MCF 10A (cell line): ENCODE measurements at regions of chr5 and their contacts with region 1.

Region 1: DNA sequence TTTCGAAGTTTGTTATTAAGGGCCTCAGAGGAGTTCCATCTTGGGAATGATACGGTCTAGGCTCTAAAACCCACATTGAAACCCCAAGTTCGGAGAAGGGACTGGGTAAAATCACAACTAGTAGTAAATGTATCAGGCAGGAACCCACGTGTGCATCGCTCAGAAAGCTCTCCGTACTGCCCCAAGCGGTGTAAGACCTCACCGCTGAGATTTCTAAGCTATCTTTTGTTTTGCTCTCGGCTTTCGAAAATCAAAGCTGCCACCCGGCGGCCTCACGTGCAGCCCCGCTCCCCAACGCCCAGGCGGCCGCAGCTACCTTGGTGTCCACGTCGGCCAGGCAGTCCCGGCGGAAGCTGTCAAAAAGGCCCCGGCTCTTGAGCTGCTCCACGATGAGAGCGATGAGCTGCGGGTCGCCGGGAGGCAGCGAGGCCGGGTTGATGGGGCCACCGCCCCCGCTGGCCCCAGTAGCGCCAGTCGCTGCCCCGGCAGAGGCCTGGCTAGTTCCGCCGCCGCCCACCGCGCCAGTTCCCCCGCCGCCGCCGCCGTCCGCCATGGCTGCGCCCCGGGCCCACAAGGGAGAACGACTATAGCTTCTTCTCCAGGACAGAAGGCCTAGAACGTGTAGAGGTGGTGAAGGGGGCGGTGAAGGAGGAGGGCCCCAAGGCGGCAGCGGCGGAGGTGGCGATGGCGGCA is 420 bp downstream of the BOD1 start:
- DNase-seq: peak; percentile 85
- H3K4me3 Mint-ChIP-seq: peak overlapping the region; percentile 78
- H3K27ac Mint-ChIP-seq: peak overlapping the region; percentile 77
- H3K4me1 Mint-ChIP-seq: peaks cover 38% of the 10 kb centered on the region
- H3K27me3 Mint-ChIP-seq: no peaks in the 10 kb centered on the region
- CTCF ChIP-seq: peak; percentile 70

Region 2: GRCh38 chr5:172315587-172316493 is 1300.2 kb before region 1 on chr5:
- CTCF ChIA-PET with region 1: no interaction called
- POLR2A ChIA-PET with region 1: no interaction called
- intact Hi-C with region 1: no loop called
- DNase-seq: no peak
- H3K4me3 Mint-ChIP-seq: no peak overlapping the region
- H3K27ac Mint-ChIP-seq: peak overlapping the region; percentile 13
- H3K4me1 Mint-ChIP-seq: peaks cover 12% of the 10 kb centered on the region
- H3K27me3 Mint-ChIP-seq: no peaks in the 10 kb centered on the region
- CTCF ChIP-seq: no peak

Region 3: GRCh38 chr5:173412566-173412965 is 203.5 kb before region 1 on chr5:
- CTCF ChIA-PET with region 1: no interaction called
- POLR2A ChIA-PET with region 1: no interaction called
- intact Hi-C with region 1: no loop called
- DNase-seq: no peak
- H3K4me3 Mint-ChIP-seq: no peak overlapping the region
- H3K27ac Mint-ChIP-seq: no peak overlapping the region
- H3K4me1 Mint-ChIP-seq: no peaks in the 10 kb centered on the region
- H3K27me3 Mint-ChIP-seq: no peaks in the 10 kb centered on the region
- CTCF ChIP-seq: no peak

Region 4: GRCh38 chr5:173536312-173536641 is 79.8 kb before region 1 on chr5:
- CTCF ChIA-PET with region 1: no interaction called
- POLR2A ChIA-PET with region 1: no interaction called
- intact Hi-C with region 1: no loop called
- DNase-seq: peak; percentile 23
- H3K4me3 Mint-ChIP-seq: no peak overlapping the region
- H3K27ac Mint-ChIP-seq: no peak overlapping the region
- H3K4me1 Mint-ChIP-seq: peaks cover 11% of the 10 kb centered on the region
- H3K27me3 Mint-ChIP-seq: no peaks in the 10 kb centered on the region
- CTCF ChIP-seq: no peak

Region 5: DNA sequence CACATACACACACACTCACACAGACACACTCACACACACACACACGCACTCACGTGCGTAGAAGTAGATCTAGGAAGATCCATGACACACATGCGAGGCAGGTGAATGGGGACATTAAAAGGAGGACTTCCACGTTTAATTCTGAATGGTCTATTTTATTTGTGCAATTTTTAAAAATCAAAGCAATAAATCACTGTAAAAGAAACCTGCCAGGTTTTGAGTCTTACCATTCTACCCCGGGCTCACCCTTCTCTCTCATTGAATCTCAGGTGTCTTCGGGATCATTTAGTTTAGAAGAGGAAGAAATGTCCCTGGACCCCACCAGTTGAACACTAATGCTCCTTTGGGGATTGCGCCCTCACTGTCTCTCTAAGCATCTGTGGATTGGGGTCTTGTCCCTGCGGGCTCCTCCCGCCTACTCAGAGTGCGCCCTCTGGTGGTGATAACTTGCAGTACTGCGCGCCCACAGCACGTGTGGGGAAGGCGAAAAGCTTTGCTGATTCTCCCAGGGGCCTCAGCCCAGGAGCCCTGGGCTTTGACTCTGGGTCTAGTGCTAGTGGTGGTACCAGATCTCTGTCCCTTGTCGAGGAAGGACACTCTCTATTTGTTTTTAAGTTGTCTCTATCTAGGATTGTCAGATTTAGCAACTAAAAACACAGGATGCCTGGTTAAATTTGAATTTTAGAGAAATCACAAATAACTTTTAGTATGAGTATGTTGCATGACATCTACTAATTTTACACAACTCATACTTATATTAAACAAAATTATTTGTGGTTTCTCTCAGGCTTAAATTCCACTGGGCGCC is 34.4 kb before region 1 on chr5:
- CTCF ChIA-PET with region 1: interaction called, 11 read pairs
- POLR2A ChIA-PET with region 1: no interaction called
- intact Hi-C with region 1: no loop called
- DNase-seq: peak; percentile 38
- H3K4me3 Mint-ChIP-seq: no peak overlapping the region
- H3K27ac Mint-ChIP-seq: no peak overlapping the region
- H3K4me1 Mint-ChIP-seq: no peaks in the 10 kb centered on the region
- H3K27me3 Mint-ChIP-seq: no peaks in the 10 kb centered on the region
- CTCF ChIP-seq: peak; percentile 78

Region 6: GRCh38 chr5:173887610-173888472 is 271.8 kb after region 1 on chr5 and contains the start of gene CPEB4:
- CTCF ChIA-PET with region 1: interaction called, 39 read pairs
- POLR2A ChIA-PET with region 1: interaction called, 26 read pairs
- intact Hi-C with region 1: loop called (anchors 2 kb)
- DNase-seq: peak; percentile 100
- H3K4me3 Mint-ChIP-seq: peak within 1 kb of the TSS; percentile 97
- H3K27ac Mint-ChIP-seq: peak within 1 kb of the TSS; percentile 99
- H3K4me1 Mint-ChIP-seq: peaks cover 49% of the 10 kb centered on the region
- H3K27me3 Mint-ChIP-seq: no peaks in the 10 kb centered on the region
- CTCF ChIP-seq: no peak
- total RNA-seq, gene CPEB4: 86.7 and 99.0 TPM in 2 replicates

Region 7: GRCh38 chr5:173963867-173964441 is 347.9 kb after region 1 on chr5:
- CTCF ChIA-PET with region 1: interaction called, 334 read pairs
- POLR2A ChIA-PET with region 1: interaction called, 46 read pairs
- intact Hi-C with region 1: no loop called
- DNase-seq: no peak
- H3K4me3 Mint-ChIP-seq: peak overlapping the region; percentile 67
- H3K27ac Mint-ChIP-seq: no peak overlapping the region
- H3K4me1 Mint-ChIP-seq: peaks cover 15% of the 10 kb centered on the region
- H3K27me3 Mint-ChIP-seq: no peaks in the 10 kb centered on the region
- CTCF ChIP-seq: no peak

Region 8: DNA sequence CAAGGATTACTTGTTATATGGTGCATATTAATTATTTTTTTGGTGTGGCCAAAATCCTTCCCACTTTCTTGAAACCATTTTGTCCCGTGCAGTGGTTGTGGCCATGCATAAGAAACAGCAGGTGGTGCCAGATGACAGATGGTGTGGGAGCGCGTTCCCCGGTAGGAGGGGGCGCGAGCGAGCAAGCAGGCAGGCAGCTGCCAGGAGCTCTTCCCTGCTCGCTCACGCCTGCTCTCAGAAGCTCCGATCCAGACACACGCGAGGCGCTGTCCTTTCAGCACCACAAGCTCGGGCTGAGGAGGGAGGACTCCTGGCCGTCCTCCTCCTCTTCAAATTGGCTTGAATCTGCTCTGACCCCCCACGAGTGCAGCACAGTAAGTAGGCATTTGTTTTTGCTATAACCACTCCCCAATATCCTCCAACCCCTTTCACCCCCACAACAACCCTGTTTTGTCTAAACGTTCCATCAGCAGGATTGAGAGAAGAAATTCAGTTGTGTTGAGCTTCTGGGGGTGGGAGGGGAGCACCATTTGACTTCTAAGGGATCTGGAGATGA is 429.5 kb after region 1 on chr5 and contains the start of gene NSG2:
- CTCF ChIA-PET with region 1: interaction called, 13 read pairs
- POLR2A ChIA-PET with region 1: no interaction called
- intact Hi-C with region 1: loop called (anchors 1 kb)
- DNase-seq: peak; percentile 96
- H3K4me3 Mint-ChIP-seq: no peak within 1 kb of the TSS
- H3K27ac Mint-ChIP-seq: no peak within 1 kb of the TSS
- H3K4me1 Mint-ChIP-seq: no peaks in the 10 kb centered on the region
- H3K27me3 Mint-ChIP-seq: peaks cover 42% of the 10 kb centered on the region
- CTCF ChIP-seq: peak; percentile 99
- total RNA-seq, gene NSG2: not detected in 2 replicates